ENCODE measurements at regions of chr4 and their contacts with region 1.

Region 1: GRCh38 chr4:7863911-7864681 is 75.6 kb downstream of the AFAP1 start:
- DNase-seq: peak in 4 of 5 donors; percentile 36 to 68 (median 58)
- H3K4me3 ChIP-seq: no peak overlapping the region
- H3K4me3 Mint-ChIP-seq: peak overlapping the region in 7 of 8 donors; percentile 35 to 76 (median 61)
- H3K27ac ChIP-seq: no peak overlapping the region
- H3K27ac Mint-ChIP-seq: peak overlapping the region; percentile 60 to 99 (median 91)
- H3K4me1 ChIP-seq: peaks cover 18% of the 10 kb centered on the region
- H3K4me1 Mint-ChIP-seq: peaks cover 26 to 43% (median 34%) of the 10 kb centered on the region in 4 donors
- H3K27me3 ChIP-seq: no peaks in the 10 kb centered on the region
- H3K27me3 Mint-ChIP-seq: peaks cover 0 to 4% of the 10 kb centered on the region in 2 donors

Region 2: GRCh38 chr4:7771541-7772507 is 92.3 kb before region 1 on chr4:
- CTCF ChIA-PET with region 1: no interaction called
- POLR2A ChIA-PET with region 1: no interaction called
- intact Hi-C with region 1: no loop called
- DNase-seq: no peak
- H3K4me3 ChIP-seq: no peak overlapping the region
- H3K4me3 Mint-ChIP-seq: peak overlapping the region in 3 of 8 donors; percentile 5 to 47 (median 17)
- H3K27ac ChIP-seq: no peak overlapping the region
- H3K27ac Mint-ChIP-seq: peak overlapping the region; percentile 39 to 84 (median 72)
- H3K4me1 ChIP-seq: peaks cover 18% of the 10 kb centered on the region
- H3K4me1 Mint-ChIP-seq: peaks cover 19 to 45% (median 34%) of the 10 kb centered on the region in 4 donors
- H3K27me3 ChIP-seq: no peaks in the 10 kb centered on the region
- H3K27me3 Mint-ChIP-seq: no peaks in the 10 kb centered on the region

Region 3: DNA sequence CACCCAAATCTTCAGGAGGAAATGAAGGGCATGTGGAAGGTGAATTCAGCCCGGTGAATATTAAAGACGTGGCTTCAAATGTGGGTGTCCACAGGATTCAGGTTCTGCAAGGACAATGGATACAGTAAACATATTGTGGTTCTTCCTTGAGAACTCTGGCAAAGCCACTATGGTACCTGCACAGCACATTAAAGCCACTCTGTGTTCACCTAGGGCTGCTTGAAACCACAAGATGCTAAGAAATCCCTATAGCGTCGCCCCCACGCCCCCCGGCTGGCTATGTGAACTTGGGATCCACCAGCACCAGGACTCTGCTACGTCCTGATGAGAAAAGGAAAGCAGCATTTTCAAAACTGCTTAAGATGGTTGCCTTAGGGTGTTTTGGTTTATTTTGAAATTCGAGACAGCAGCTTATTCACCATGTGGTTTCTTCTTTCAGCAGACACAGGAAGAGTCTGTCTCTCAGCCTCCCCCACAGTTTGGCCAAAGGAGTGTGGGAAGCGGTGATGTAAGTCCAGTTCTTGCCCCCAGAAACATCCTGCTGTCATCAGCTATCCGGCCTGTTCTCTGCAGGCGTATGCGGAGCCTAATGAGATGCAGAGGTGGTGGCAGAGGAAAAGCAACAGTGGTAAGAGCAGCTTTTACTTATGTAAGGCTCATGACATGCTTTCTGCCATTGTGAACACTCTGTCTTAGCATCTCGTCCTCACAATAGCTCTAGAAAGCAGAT is 35.9 kb before region 1 on chr4:
- CTCF ChIA-PET with region 1: interaction called, 4 read pairs
- POLR2A ChIA-PET with region 1: interaction called, 8 read pairs
- intact Hi-C with region 1: loop called (anchors 5 kb)
- DNase-seq: peak; percentile 47 to 90 (median 57)
- H3K4me3 ChIP-seq: peak overlapping the region in 1 of 2 donors; percentile 29
- H3K4me3 Mint-ChIP-seq: peak overlapping the region; percentile 5 to 86 (median 77)
- H3K27ac ChIP-seq: peak overlapping the region; percentile 55
- H3K27ac Mint-ChIP-seq: peak overlapping the region; percentile 88 to 97 (median 89)
- H3K4me1 ChIP-seq: peaks cover 53% of the 10 kb centered on the region
- H3K4me1 Mint-ChIP-seq: peaks cover 54 to 71% (median 61%) of the 10 kb centered on the region in 4 donors
- H3K27me3 ChIP-seq: no peaks in the 10 kb centered on the region
- H3K27me3 Mint-ChIP-seq: no peaks in the 10 kb centered on the region

Region 4: GRCh38 chr4:7956311-7956808 is 92.3 kb after region 1 on chr4:
- CTCF ChIA-PET with region 1: no interaction called
- POLR2A ChIA-PET with region 1: no interaction called
- intact Hi-C with region 1: no loop called
- DNase-seq: no peak
- H3K4me3 ChIP-seq: no peak overlapping the region
- H3K4me3 Mint-ChIP-seq: no peak overlapping the region
- H3K27ac ChIP-seq: no peak overlapping the region
- H3K27ac Mint-ChIP-seq: no peak overlapping the region
- H3K4me1 ChIP-seq: peaks cover 13% of the 10 kb centered on the region
- H3K4me1 Mint-ChIP-seq: peaks cover 5 to 15% (median 9%) of the 10 kb centered on the region in 4 donors
- H3K27me3 ChIP-seq: no peaks in the 10 kb centered on the region
- H3K27me3 Mint-ChIP-seq: no peaks in the 10 kb centered on the region

Region 5: GRCh38 chr4:8320386-8320750 is 456.3 kb after region 1 on chr4:
- CTCF ChIA-PET with region 1: no interaction called
- POLR2A ChIA-PET with region 1: no interaction called
- intact Hi-C with region 1: no loop called
- DNase-seq: no peak
- H3K4me3 ChIP-seq: no peak overlapping the region
- H3K4me3 Mint-ChIP-seq: no peak overlapping the region
- H3K27ac ChIP-seq: no peak overlapping the region
- H3K27ac Mint-ChIP-seq: peak overlapping the region in 1 of 7 donors; percentile 5
- H3K4me1 ChIP-seq: no peaks in the 10 kb centered on the region
- H3K4me1 Mint-ChIP-seq: no peaks in the 10 kb centered on the region
- H3K27me3 ChIP-seq: no peaks in the 10 kb centered on the region
- H3K27me3 Mint-ChIP-seq: peaks cover 2 to 6% of the 10 kb centered on the region in 2 donors

Measured in CD4-positive, alpha-beta memory T cell (primary cell).